Activated CD4-positive, alpha-beta T cell treated with anti-CD3 and anti-CD28 coated beads for 36 hours (primary cell): ENCODE measurements at regions of chr15 and their contacts with region 1.

Region 1: GRCh38 chr15:75201609-75202250 is at the start of gene C15orf39:
- DNase-seq: peak; percentile 87
- ATAC-seq: peak; percentile 57
- H3K4me3 Mint-ChIP-seq: peak within 1 kb of the TSS; percentile 86
- H3K27ac Mint-ChIP-seq: peak within 1 kb of the TSS; percentile 89
- H3K4me1 Mint-ChIP-seq: peaks cover 34% of the 10 kb centered on the region
- H3K27me3 Mint-ChIP-seq: no peaks in the 10 kb centered on the region
- total RNA-seq, gene C15orf39: 18.6 to 25.1 TPM

Region 2: DNA sequence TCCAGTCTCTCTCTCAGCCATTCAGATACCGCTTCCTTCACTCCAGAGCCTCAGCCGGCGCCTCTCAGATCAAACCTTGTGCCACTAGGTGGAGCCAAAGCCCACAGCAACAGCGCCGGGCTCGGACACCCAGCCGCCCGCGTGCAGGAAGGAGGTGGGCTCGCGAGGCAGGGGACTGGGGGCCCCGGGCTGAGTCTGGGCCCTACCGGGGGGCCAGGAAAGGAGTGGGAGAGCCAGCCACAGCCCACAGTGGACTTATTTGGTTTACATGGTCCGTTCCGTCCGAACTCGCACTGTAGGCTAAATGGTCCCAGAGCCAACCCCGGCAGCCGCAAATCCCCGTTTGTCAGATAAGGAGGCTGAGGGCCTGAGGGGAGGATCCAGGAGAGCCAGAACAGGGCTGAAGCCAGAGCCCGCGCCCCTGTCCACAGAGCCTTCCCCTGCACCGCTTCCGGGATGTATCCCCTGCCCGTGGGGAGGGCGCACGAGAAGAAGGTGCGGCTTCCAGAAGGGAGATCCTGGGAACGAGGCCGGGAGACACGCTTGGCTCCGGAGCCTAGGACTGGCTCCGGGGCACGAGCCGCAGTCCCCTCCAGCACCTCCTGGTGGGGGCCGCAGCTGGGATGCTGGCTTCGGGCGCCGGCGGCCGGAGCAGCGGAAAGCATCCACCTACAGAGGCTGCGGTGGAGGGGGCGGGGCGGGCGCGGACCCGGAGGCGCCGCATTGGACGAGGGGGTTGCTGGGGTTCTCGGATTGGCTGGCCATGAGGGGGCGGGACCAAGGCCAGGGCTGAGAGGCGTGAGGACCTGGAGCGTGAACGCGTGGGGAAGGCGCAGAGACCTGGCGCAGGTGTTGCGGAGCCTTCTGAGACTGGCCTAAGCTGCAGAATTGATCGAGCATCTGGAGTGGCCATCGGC is 827.7 kb before region 1 on chr15:
- CTCF ChIA-PET with region 1: no interaction called
- POLR2A ChIA-PET with region 1: no interaction called
- intact Hi-C with region 1: loop called in 1 of 2 experiments (anchors 2 kb)
- DNase-seq: peak; percentile 97
- ATAC-seq: peak; percentile 84
- H3K4me3 Mint-ChIP-seq: peak overlapping the region; percentile 76
- H3K27ac Mint-ChIP-seq: no peak overlapping the region
- H3K4me1 Mint-ChIP-seq: peaks cover 31% of the 10 kb centered on the region
- H3K27me3 Mint-ChIP-seq: peaks cover 7% of the 10 kb centered on the region

Region 3: DNA sequence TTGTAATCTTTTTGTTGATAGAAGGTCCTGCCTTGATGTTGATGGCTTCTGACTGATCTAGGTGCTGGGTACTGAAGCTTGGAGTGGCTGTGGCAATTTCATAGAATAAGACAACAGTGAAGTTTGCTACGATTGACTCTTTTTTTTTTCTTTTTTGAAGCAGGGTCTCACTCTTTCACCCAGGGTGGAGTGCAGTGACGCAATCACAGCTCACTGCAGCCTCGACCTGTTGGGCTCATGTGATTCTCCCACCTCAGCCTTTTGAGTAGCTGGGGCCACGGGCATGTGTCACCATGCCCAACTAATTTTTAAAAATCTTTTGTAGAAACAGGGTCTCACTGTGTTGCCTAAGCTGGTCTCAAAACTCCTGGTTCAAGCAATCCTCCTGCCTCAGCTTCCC is 646.5 kb before region 1 on chr15:
- CTCF ChIA-PET with region 1: no interaction called
- POLR2A ChIA-PET with region 1: no interaction called
- intact Hi-C with region 1: no loop called
- DNase-seq: no peak
- ATAC-seq: no peak
- H3K4me3 Mint-ChIP-seq: no peak overlapping the region
- H3K27ac Mint-ChIP-seq: no peak overlapping the region
- H3K4me1 Mint-ChIP-seq: peaks cover 32% of the 10 kb centered on the region
- H3K27me3 Mint-ChIP-seq: no peaks in the 10 kb centered on the region

Region 4: GRCh38 chr15:74781431-74782258 is 420.1 kb before region 1 on chr15 and contains the start of gene CSK:
- CTCF ChIA-PET with region 1: no interaction called
- POLR2A ChIA-PET with region 1: no interaction called
- intact Hi-C with region 1: loop called (anchors 2 to 10 kb)
- DNase-seq: peak; percentile 84
- ATAC-seq: peak; percentile 27
- H3K4me3 Mint-ChIP-seq: peak within 1 kb of the TSS; percentile 89
- H3K27ac Mint-ChIP-seq: peak within 1 kb of the TSS; percentile 100
- H3K4me1 Mint-ChIP-seq: peaks cover 56% of the 10 kb centered on the region
- H3K27me3 Mint-ChIP-seq: no peaks in the 10 kb centered on the region
- total RNA-seq, gene CSK: 229 to 272 TPM

Region 5: DNA sequence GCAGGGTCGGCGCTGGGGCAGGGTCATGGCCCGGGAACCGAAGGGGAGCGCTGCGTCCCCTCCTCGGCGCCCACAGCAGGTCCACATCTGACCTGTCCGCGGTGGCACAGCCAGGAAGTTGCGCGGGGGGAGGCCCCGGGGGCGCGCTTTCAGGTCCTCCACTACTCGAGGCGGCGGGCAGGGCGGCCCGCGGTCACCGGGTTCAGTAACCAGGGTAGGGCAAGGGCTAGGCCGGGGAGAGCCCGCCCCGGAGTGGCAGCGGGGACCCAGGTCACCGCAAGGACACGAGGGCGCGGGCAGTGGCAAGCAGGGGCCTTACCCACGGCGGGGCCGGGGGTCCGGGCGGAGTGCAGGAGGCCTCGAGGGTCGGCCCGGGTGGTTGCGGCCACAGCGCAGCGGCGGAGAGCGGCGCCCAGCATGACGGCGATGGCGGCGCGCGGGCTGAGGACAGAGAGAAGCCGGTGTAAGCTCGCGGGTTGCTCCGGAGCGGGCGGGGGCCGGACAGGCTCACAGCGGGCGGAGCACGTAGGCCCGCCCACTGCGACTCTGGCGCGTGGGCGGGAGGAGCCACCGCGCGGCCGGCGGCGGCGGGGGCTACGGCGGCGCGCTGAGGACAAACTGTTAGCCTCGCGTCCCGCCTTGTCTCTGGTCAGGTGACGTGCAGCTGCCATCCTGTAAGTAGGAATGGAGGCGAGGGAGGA is 264.0 kb before region 1 on chr15 and contains the start of gene COX5A:
- CTCF ChIA-PET with region 1: no interaction called
- POLR2A ChIA-PET with region 1: interaction called, 4 read pairs
- intact Hi-C with region 1: loop called (anchors 1 kb)
- DNase-seq: peak; percentile 96
- ATAC-seq: peak; percentile 96
- H3K4me3 Mint-ChIP-seq: peak within 1 kb of the TSS; percentile 88
- H3K27ac Mint-ChIP-seq: peak within 1 kb of the TSS; percentile 91
- H3K4me1 Mint-ChIP-seq: peaks cover 31% of the 10 kb centered on the region
- H3K27me3 Mint-ChIP-seq: no peaks in the 10 kb centered on the region
- total RNA-seq, gene COX5A: 313 to 319 TPM

Region 6: DNA sequence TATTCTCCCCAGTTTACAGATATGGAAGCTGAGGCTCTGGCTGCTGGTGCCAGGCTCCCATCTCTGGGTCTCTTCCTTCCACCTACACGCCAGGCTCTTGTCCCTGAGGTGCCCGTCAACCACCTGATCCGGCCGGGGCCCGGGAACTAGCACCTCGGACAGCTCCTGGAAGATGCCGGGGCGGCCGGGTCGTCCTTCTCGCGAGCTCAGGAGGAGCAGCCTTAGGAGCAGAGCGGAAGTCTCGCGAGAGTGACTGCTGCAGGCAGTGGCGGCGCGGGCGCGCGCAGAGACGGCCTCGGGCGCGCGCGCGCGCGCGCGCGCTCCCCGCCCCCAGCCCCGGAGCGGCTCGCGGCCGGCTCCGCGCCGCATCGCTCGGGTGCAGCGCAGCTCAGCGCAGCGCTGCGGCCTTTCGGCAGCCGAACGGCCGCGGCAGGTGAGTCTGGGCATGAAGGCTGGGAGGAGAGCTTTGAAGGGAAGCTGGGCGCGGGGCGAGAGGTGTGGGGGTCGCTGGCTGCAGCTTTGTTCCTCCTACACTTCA is 206.4 kb before region 1 on chr15 and contains the start of gene SCAMP5:
- CTCF ChIA-PET with region 1: interaction called, 3 read pairs
- POLR2A ChIA-PET with region 1: interaction called, 3 read pairs
- intact Hi-C with region 1: loop called in 1 of 2 experiments (anchors 1 kb)
- DNase-seq: peak; percentile 98
- ATAC-seq: peak; percentile 98
- H3K4me3 Mint-ChIP-seq: peak within 1 kb of the TSS; percentile 69
- H3K27ac Mint-ChIP-seq: no peak within 1 kb of the TSS
- H3K4me1 Mint-ChIP-seq: peaks cover 16% of the 10 kb centered on the region
- H3K27me3 Mint-ChIP-seq: peaks cover 8% of the 10 kb centered on the region
- total RNA-seq, gene SCAMP5: 3.9 to 4.5 TPM

Region 7: GRCh38 chr15:75090388-75090734 is 111.4 kb before region 1 on chr15:
- CTCF ChIA-PET with region 1: interaction called, 7 read pairs
- POLR2A ChIA-PET with region 1: no interaction called
- intact Hi-C with region 1: loop called (anchors 5 kb)
- DNase-seq: no peak
- ATAC-seq: no peak
- H3K4me3 Mint-ChIP-seq: no peak overlapping the region
- H3K27ac Mint-ChIP-seq: no peak overlapping the region
- H3K4me1 Mint-ChIP-seq: peaks cover 18% of the 10 kb centered on the region
- H3K27me3 Mint-ChIP-seq: peaks cover 11% of the 10 kb centered on the region

Region 8: GRCh38 chr15:75420698-75421097 is 219.0 kb after region 1 on chr15:
- CTCF ChIA-PET with region 1: no interaction called
- POLR2A ChIA-PET with region 1: no interaction called
- intact Hi-C with region 1: no loop called
- DNase-seq: no peak
- ATAC-seq: no peak
- H3K4me3 Mint-ChIP-seq: no peak overlapping the region
- H3K27ac Mint-ChIP-seq: no peak overlapping the region
- H3K4me1 Mint-ChIP-seq: peaks cover 15% of the 10 kb centered on the region
- H3K27me3 Mint-ChIP-seq: no peaks in the 10 kb centered on the region

Region 9: GRCh38 chr15:75639709-75640482 is 438.2 kb after region 1 on chr15 and contains the start of gene IMP3:
- CTCF ChIA-PET with region 1: no interaction called
- POLR2A ChIA-PET with region 1: no interaction called
- intact Hi-C with region 1: loop called (anchors 2 to 10 kb)
- DNase-seq: peak; percentile 96
- ATAC-seq: peak; percentile 92
- H3K4me3 Mint-ChIP-seq: peak within 1 kb of the TSS; percentile 99
- H3K27ac Mint-ChIP-seq: peak within 1 kb of the TSS; percentile 96
- H3K4me1 Mint-ChIP-seq: peaks cover 25% of the 10 kb centered on the region
- H3K27me3 Mint-ChIP-seq: no peaks in the 10 kb centered on the region
- total RNA-seq, gene IMP3: 80.3 to 87.5 TPM